Calu3 (cell line): ENCODE measurements at regions of chrX and their contacts with region 1.

Region 1: DNA sequence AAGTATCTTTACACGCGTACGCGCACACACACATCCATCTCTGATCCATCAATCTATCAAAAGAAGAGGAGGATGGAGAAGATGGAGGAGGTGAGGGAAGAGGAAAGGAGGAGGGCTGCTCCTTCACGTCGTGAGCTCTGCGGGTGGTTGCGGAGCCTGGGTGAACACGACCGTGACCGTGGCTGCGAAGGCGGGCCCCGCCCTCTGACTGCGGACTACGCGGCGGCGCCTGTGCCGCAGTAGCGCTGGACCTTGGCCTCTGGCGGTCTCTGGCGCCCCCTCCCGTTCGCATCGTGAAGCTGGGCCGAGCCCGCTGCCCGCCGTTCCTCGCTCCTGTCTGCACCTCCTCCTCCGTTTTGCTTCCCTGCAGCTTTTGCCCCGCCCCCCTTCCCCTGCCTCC is 37.7 kb upstream of the ARAF start:
- DNase-seq: peak; percentile 91
- H3K4me3 Mint-ChIP-seq: peak overlapping the region; percentile 59
- H3K27ac Mint-ChIP-seq: no peak overlapping the region
- H3K4me1 Mint-ChIP-seq: no peaks in the 10 kb centered on the region
- H3K27me3 Mint-ChIP-seq: no peaks in the 10 kb centered on the region
- CTCF ChIP-seq: peak; percentile 74

Region 2: GRCh38 chrX:47078129-47079043 is 444.9 kb before region 1 on chrX and contains the start of gene RGN:
- CTCF ChIA-PET with region 1: interaction called, 11 read pairs
- intact Hi-C with region 1: no loop called
- DNase-seq: peak; percentile 14
- H3K4me3 Mint-ChIP-seq: peak within 1 kb of the TSS; percentile 55
- H3K27ac Mint-ChIP-seq: no peak within 1 kb of the TSS
- H3K4me1 Mint-ChIP-seq: no peaks in the 10 kb centered on the region
- H3K27me3 Mint-ChIP-seq: no peaks in the 10 kb centered on the region
- CTCF ChIP-seq: no peak
- total RNA-seq, gene RGN: 0.42 TPM in 1 of 2 replicates, not detected in the other

Region 3: DNA sequence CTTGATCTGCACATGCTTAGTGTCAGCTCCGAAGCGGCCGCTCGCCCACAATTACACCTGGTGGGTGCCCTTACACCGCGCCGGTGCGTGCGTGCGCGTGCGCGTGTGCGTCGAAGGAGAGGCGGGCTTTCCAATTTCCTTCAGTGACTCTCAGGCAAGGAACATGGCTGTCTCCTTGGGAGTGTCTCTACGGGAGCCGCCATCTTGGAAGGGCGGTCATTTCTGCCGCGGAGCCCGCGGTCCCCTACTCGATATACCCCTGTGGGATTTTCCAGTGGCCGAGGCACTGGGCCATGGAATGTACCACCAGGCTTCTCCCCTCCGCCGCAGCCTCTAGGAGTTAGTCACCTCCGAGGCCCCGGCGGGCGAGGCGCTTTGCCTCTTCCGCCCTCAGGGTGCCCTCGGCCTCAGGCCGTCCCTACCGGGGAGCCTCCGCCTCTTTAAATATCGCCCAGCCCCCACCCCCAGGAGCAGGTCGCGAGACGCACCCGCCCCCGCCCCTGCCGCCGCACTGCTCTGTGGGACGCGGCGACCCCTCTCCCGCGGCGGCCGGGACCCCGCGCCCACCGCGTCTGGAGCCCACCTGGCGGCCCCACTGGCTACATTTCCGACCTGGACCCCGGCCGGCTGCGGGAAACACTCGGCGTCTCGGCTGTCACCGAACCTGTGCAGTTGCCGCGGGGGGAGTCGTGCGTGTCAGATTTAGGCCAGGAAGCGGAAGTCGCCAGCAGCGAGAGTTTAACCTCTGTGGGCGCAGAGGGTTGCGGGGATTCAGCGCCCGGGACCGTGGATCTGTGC is 40.6 kb before region 1 on chrX and contains the start of gene ZNF41:
- CTCF ChIA-PET with region 1: no interaction called
- intact Hi-C with region 1: no loop called
- DNase-seq: peak; percentile 83
- H3K4me3 Mint-ChIP-seq: peak within 1 kb of the TSS; percentile 83
- H3K27ac Mint-ChIP-seq: peak within 1 kb of the TSS; percentile 90
- H3K4me1 Mint-ChIP-seq: peaks cover 11% of the 10 kb centered on the region
- H3K27me3 Mint-ChIP-seq: no peaks in the 10 kb centered on the region
- CTCF ChIP-seq: no peak
- total RNA-seq, gene ZNF41: 10.8 and 12.2 TPM in 2 replicates